Activated B cell treated with CpG ODN at 0.5 μM for 24 hours (primary cell): ENCODE measurements at regions of chr16 and their contacts with region 1.

Region 1: DNA sequence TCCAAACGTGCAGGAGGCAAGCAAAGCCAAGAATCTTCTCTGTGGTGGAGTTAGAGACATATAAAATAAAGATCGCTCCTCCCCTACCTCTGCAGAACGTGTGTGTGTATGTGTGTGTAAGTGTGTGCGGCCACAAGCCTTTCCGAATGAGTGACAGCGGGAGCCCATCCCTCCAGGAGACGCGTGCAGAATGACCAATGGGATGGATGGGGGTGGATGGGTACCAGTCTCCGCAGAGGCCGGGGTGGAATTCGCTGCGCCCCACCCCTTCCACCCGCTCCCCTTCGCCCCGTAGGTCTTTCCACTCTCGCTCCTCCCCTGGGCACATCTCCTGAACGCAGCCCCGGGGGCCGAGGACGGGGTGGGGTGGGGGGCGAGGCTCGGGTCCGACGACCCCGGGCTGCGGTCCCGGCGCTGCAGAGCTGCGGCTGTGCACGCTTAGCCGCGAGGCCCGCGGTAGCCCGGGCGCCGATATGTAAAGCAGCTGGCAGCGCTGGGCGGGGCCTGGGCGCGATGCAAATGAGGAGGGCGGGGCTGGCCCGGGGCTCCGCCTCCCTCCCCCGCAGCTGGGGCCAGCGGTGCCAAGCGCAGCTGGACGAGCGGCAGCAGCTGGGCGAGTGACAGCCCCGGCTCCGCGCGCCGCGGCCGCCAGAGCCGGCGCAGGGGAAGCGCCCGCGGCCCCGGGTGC is at the start of gene PRKCB:
- DNase-seq: peak; percentile 98
- ATAC-seq: peak; percentile 80
- H3K4me3 Mint-ChIP-seq: peak within 1 kb of the TSS; percentile 98
- H3K27ac Mint-ChIP-seq: peak within 1 kb of the TSS; percentile 91
- H3K4me1 Mint-ChIP-seq: peaks cover 43% of the 10 kb centered on the region
- H3K27me3 Mint-ChIP-seq: no peaks in the 10 kb centered on the region
- CTCF ChIP-seq: no peak
- total RNA-seq, gene PRKCB: 122 and 146 TPM in 2 replicates

Region 2: GRCh38 chr16:23847948-23848347 is 12.4 kb after region 1 on chr16:
- CTCF ChIA-PET with region 1: interaction called, 5 read pairs
- POLR2A ChIA-PET with region 1: interaction called, 3 read pairs
- intact Hi-C with region 1: loop called (anchors 1 kb)
- DNase-seq: no peak
- ATAC-seq: peak; percentile 76
- H3K4me3 Mint-ChIP-seq: peak overlapping the region; percentile 29
- H3K27ac Mint-ChIP-seq: peak overlapping the region; percentile 82
- H3K4me1 Mint-ChIP-seq: peaks cover 91% of the 10 kb centered on the region
- H3K27me3 Mint-ChIP-seq: no peaks in the 10 kb centered on the region
- CTCF ChIP-seq: no peak

Region 3: GRCh38 chr16:23858542-23858941 is 23.0 kb after region 1 on chr16:
- CTCF ChIA-PET with region 1: interaction called, 5 read pairs
- POLR2A ChIA-PET with region 1: interaction called, 17 read pairs
- intact Hi-C with region 1: loop called (anchors 1 kb)
- DNase-seq: no peak
- ATAC-seq: no peak
- H3K4me3 Mint-ChIP-seq: peak overlapping the region; percentile 24
- H3K27ac Mint-ChIP-seq: peak overlapping the region; percentile 89
- H3K4me1 Mint-ChIP-seq: peaks cover 97% of the 10 kb centered on the region
- H3K27me3 Mint-ChIP-seq: no peaks in the 10 kb centered on the region
- CTCF ChIP-seq: no peak

Region 4: DNA sequence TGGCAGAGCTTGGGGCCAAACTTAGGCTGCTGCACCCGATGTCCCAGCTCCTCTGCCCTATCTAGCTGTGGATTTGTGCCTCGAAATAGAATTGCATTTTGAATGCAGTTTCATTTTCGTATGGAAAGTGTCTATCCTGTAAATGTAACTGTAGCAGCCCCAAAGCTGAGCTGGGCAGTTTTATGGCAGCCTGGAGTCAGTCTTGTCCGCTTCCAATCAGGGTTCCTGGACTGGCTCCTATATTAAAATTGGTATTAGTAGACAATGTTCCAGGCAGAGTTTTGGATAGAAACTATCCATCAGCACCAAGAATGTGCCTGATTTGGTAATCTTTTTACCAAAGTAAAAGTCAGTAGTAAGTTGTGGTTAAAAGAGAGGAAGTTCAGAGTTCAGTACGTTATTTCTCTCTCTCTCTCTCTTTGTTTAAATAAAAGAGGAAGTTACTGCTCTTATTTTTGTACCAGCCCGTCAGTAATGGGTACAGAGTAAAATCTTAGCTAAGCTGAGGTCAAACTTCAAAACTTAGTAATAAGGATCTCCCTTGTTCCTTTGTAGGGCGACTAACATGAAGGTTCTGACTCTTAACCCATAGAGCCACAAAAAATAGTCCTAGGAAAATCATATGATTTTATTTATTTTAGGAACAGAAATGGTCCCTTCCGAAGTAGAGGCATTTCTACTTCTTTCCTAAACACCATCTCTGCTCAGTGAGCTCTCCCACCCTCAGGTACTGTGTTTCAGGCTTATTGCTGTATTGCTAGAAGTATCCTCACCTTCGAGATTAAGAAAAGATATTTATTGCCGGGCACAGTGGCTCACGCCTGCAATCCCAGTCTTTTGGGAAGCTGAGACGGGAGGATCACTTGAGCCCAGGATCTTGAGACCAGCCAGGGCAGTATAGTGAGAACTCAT is 28.2 kb after region 1 on chr16:
- CTCF ChIA-PET with region 1: interaction called, 4 read pairs
- POLR2A ChIA-PET with region 1: interaction called, 17 read pairs
- intact Hi-C with region 1: loop called (anchors 1 kb)
- DNase-seq: no peak
- ATAC-seq: peak; percentile 78
- H3K4me3 Mint-ChIP-seq: peak overlapping the region; percentile 87
- H3K27ac Mint-ChIP-seq: peak overlapping the region; percentile 96
- H3K4me1 Mint-ChIP-seq: peaks cover 95% of the 10 kb centered on the region
- H3K27me3 Mint-ChIP-seq: no peaks in the 10 kb centered on the region
- CTCF ChIP-seq: no peak

Region 5: DNA sequence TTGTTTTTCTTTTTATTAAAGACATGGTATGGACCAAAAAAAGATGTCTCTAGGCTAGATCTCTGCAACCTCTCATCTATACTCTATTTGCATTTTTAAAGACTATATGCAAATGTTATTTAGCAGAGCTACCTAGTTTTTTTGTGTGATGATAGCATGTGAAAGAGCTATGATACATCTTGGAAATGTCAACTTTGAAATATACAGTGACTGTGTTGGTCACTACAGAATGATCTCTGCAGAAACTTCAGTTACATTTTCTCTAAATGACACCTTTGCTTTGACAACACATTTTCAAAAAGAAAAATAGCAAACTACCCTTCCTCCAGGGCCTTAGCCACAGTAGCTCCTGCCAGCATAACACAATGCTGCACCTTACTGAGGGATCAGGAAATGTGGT is 86.9 kb after region 1 on chr16:
- CTCF ChIA-PET with region 1: no interaction called
- POLR2A ChIA-PET with region 1: no interaction called
- intact Hi-C with region 1: no loop called
- DNase-seq: no peak
- ATAC-seq: no peak
- H3K4me3 Mint-ChIP-seq: no peak overlapping the region
- H3K27ac Mint-ChIP-seq: peak overlapping the region; percentile 26
- H3K4me1 Mint-ChIP-seq: peaks cover 77% of the 10 kb centered on the region
- H3K27me3 Mint-ChIP-seq: no peaks in the 10 kb centered on the region
- CTCF ChIP-seq: no peak

Region 6: GRCh38 chr16:24036614-24037013 is 201.1 kb after region 1 on chr16:
- CTCF ChIA-PET with region 1: no interaction called
- POLR2A ChIA-PET with region 1: interaction called, 6 read pairs
- intact Hi-C with region 1: loop called (anchors 1 kb)
- DNase-seq: no peak
- ATAC-seq: peak; percentile 55
- H3K4me3 Mint-ChIP-seq: peak overlapping the region; percentile 15
- H3K27ac Mint-ChIP-seq: peak overlapping the region; percentile 70
- H3K4me1 Mint-ChIP-seq: peaks cover 48% of the 10 kb centered on the region
- H3K27me3 Mint-ChIP-seq: no peaks in the 10 kb centered on the region
- CTCF ChIP-seq: no peak